ENCODE measurements at regions of chr14 and their contacts with region 1.

Region 1: GRCh38 chr14:30656190-30656632 is 34.1 kb downstream of the SCFD1 start:
- DNase-seq: peak; percentile 20
- H3K4me3 ChIP-seq: no peak overlapping the region
- H3K27ac ChIP-seq: no peak overlapping the region
- H3K4me1 ChIP-seq: no peaks in the 10 kb centered on the region
- H3K27me3 ChIP-seq: no peaks in the 10 kb centered on the region
- CTCF ChIP-seq: peak; percentile 26 to 55 (median 35)
- POLR2A ChIP-seq: no peak

Region 2: GRCh38 chr14:31357279-31357678 is 701.1 kb after region 1 on chr14:
- intact Hi-C with region 1: loop called (anchors 10 kb)
- DNase-seq: no peak
- H3K4me3 ChIP-seq: no peak overlapping the region
- H3K27ac ChIP-seq: no peak overlapping the region
- H3K4me1 ChIP-seq: no peaks in the 10 kb centered on the region
- H3K27me3 ChIP-seq: no peaks in the 10 kb centered on the region
- CTCF ChIP-seq: no peak
- POLR2A ChIP-seq: no peak